Left ventricle myocardium inferior (tissue), 1 donor: ENCODE measurements at regions of chr10 and their contacts with region 1.

Region 1: GRCh38 chr10:110508806-110509544 is 11.3 kb downstream of the DUSP5 start:
- DNase-seq: peak; percentile 71
- H3K4me3 ChIP-seq: peak overlapping the region; percentile 17
- H3K27ac ChIP-seq: peak overlapping the region; percentile 97
- H3K4me1 ChIP-seq: peaks cover 87% of the 10 kb centered on the region
- H3K27me3 ChIP-seq: no peaks in the 10 kb centered on the region
- CTCF ChIP-seq: no peak

Region 2: GRCh38 chr10:110395725-110396651 is 113.0 kb before region 1 on chr10:
- intact Hi-C with region 1: no loop called
- DNase-seq: no peak
- H3K4me3 ChIP-seq: no peak overlapping the region
- H3K27ac ChIP-seq: no peak overlapping the region
- H3K4me1 ChIP-seq: peaks cover 35% of the 10 kb centered on the region
- H3K27me3 ChIP-seq: no peaks in the 10 kb centered on the region
- CTCF ChIP-seq: no peak

Region 3: GRCh38 chr10:110530131-110530831 is 21.3 kb after region 1 on chr10:
- intact Hi-C with region 1: loop called (anchors 2 kb)
- DNase-seq: peak; percentile 66
- H3K4me3 ChIP-seq: peak overlapping the region; percentile 55
- H3K27ac ChIP-seq: peak overlapping the region; percentile 3
- H3K4me1 ChIP-seq: peaks cover 8% of the 10 kb centered on the region
- H3K27me3 ChIP-seq: no peaks in the 10 kb centered on the region
- CTCF ChIP-seq: no peak

Region 4: GRCh38 chr10:110591760-110592159 is 82.8 kb after region 1 on chr10:
- intact Hi-C with region 1: no loop called
- DNase-seq: no peak
- H3K4me3 ChIP-seq: no peak overlapping the region
- H3K27ac ChIP-seq: no peak overlapping the region
- H3K4me1 ChIP-seq: no peaks in the 10 kb centered on the region
- H3K27me3 ChIP-seq: no peaks in the 10 kb centered on the region
- CTCF ChIP-seq: no peak